IMR-90 (cell line): ENCODE measurements at regions of chr3 and their contacts with region 1.

Region 1: GRCh38 chr3:96330795-96331194 is 483.6 kb upstream of the EPHA6 start:
- DNase-seq: no peak
- ATAC-seq: no peak
- H3K4me3 ChIP-seq: no peak overlapping the region
- H3K27ac ChIP-seq: no peak overlapping the region
- H3K4me1 ChIP-seq: no peaks in the 10 kb centered on the region
- H3K27me3 ChIP-seq: no peaks in the 10 kb centered on the region
- CTCF ChIP-seq: no peak
- POLR2A ChIP-seq: no peak
- RAD21 ChIP-seq: no peak

Region 2: DNA sequence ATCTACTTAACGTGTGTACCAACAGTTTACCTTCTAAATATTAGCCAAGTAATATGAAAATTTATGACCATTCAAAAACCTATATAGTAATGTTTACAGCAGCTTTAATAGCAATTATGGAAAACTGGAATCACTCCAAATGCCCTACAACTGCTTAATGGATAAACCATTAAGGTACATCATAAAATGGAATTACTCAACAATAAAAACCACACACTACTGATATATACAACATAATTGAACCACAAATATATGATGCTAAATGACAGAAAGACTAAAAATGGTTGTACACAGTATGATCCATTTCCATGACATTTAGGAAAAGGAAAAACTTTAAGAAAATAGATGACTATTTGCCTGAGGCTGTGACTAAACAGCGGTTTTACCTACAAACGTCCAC is 16.5 kb after region 1 on chr3:
- CTCF ChIA-PET with region 1: no interaction called
- POLR2A ChIA-PET with region 1: no interaction called
- dilution Hi-C with region 1: no loop called
- in situ Hi-C with region 1: no loop called
- intact Hi-C with region 1: loop called (anchors 1 kb)
- DNase-seq: no peak
- ATAC-seq: no peak
- H3K4me3 ChIP-seq: no peak overlapping the region
- H3K27ac ChIP-seq: no peak overlapping the region
- H3K4me1 ChIP-seq: no peaks in the 10 kb centered on the region
- H3K27me3 ChIP-seq: no peaks in the 10 kb centered on the region
- CTCF ChIP-seq: no peak
- POLR2A ChIP-seq: no peak
- RAD21 ChIP-seq: no peak

Region 3: DNA sequence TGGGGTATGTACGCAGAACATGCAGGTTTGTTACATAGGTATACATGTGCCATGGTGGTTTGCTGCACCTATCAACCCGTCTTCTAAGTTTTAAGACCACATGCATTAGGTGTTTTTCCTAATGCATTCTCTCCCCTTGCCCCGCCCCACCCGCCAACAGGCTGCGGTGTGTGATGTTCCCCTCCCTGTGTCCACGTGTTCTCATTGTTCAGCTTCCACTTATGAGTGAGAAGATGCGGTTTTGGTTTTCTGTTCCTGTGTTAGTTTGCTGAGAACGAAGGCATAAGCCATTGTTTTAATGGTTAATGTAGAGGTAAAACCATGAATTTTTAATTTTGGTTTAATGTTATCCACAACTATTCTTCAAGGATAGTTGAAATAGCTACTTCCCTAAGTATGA is 136.8 kb after region 1 on chr3:
- CTCF ChIA-PET with region 1: no interaction called
- POLR2A ChIA-PET with region 1: no interaction called
- dilution Hi-C with region 1: no loop called
- in situ Hi-C with region 1: no loop called
- intact Hi-C with region 1: no loop called
- DNase-seq: no peak
- ATAC-seq: no peak
- H3K4me3 ChIP-seq: no peak overlapping the region
- H3K27ac ChIP-seq: no peak overlapping the region
- H3K4me1 ChIP-seq: no peaks in the 10 kb centered on the region
- H3K27me3 ChIP-seq: no peaks in the 10 kb centered on the region
- CTCF ChIP-seq: no peak
- POLR2A ChIP-seq: no peak
- RAD21 ChIP-seq: no peak

Region 4: GRCh38 chr3:96734273-96735009 is 403.6 kb after region 1 on chr3:
- CTCF ChIA-PET with region 1: no interaction called
- POLR2A ChIA-PET with region 1: no interaction called
- dilution Hi-C with region 1: no loop called
- in situ Hi-C with region 1: no loop called
- intact Hi-C with region 1: no loop called
- DNase-seq: no peak
- ATAC-seq: no peak
- H3K4me3 ChIP-seq: no peak overlapping the region
- H3K27ac ChIP-seq: no peak overlapping the region
- H3K4me1 ChIP-seq: no peaks in the 10 kb centered on the region
- H3K27me3 ChIP-seq: no peaks in the 10 kb centered on the region
- CTCF ChIP-seq: no peak
- POLR2A ChIP-seq: no peak
- RAD21 ChIP-seq: no peak